Heart left ventricle (tissue), 16 donors: ENCODE measurements at regions of chr5 and their contacts with region 1.

Region 1: GRCh38 chr5:157994906-157995519 is 136.1 kb upstream of the CLINT1 start:
- DNase-seq: peak; percentile 60 to 73 (median 69)
- ATAC-seq: peak; percentile 91 to 96 (median 95)
- H3K4me3 ChIP-seq: no peak overlapping the region
- H3K27ac ChIP-seq: no peak overlapping the region
- H3K4me1 ChIP-seq: no peaks in the 10 kb centered on the region
- H3K27me3 ChIP-seq: peaks cover 0 to 4% (median 0%) of the 10 kb centered on the region in 9 donors
- CTCF ChIP-seq: peak; percentile 56 to 81 (median 76)
- POLR2A ChIP-seq: no peak

Region 2: DNA sequence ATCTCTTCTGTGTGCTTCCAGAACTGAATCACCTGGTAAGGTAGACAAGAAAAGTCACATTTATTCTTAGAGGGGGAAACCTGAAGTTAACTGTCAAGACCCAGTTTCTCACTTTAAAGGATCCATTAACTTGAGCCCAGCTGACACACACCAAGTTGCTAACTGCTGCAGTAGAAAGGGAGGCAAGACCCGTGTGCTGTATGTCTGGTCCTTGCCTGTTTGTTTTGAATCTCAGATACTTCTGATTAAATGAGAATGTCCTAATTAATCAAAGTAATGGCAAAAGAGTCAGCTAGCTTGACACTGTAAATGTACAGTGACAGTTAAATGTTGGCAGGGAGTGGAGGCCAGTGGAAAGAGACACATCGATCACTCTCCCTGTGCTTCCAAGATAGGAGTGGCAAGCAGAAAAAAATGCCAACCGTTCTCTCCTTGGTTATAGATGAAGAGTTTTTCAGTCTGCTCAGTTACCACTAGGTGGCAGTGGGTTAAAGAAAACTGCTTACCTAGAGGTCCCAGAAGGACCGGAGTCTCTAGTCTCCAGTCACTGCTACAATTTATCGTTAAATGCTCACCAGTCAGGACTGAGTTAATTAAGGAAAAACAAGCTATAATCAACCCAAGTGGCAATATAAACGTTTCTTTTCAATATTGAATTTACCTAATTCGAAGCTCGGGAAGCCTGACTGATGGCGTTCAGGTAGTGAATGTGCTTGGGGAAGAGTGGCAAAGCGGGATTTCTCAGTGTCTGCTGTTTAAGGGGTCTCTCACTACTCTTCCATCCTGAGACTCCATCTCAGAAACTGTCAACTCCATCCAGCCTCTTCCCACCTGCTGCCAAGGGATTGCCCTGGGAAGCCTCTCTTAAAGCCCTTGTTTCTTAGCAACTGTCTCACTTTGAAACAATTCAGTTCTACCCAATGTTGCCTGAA is 233.1 kb before region 1 on chr5:
- intact Hi-C with region 1: loop called in 1 of 10 experiments (anchors 5 kb)
- DNase-seq: no peak
- ATAC-seq: peak; percentile 32 to 86 (median 77)
- H3K4me3 ChIP-seq: no peak overlapping the region
- H3K27ac ChIP-seq: no peak overlapping the region
- H3K4me1 ChIP-seq: peaks cover 0 to 6% (median 0%) of the 10 kb centered on the region in 12 donors
- H3K27me3 ChIP-seq: no peaks in the 10 kb centered on the region
- CTCF ChIP-seq: peak; percentile 62 to 83 (median 78)
- POLR2A ChIP-seq: no peak

Region 3: DNA sequence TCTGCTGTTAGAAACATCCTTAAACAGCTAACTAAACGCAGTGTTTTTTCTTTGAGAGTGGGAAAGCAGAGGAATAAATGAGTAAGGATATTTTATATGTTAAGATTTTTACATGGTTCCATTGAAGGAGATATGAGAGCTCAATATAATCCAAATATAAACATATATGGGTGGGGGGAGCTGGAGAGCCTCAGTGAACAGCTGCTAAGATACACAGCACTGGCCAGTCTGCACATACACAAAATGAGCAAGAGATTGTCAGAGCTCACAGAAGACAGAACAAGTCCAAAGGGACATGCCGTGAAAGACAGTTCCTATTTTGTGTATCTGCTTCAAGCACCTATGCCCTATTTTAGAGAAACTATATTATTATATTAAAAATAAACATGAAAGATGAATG is 182.9 kb before region 1 on chr5:
- intact Hi-C with region 1: loop called in 8 of 10 experiments (anchors 1 to 10 kb)
- DNase-seq: no peak
- ATAC-seq: no peak
- H3K4me3 ChIP-seq: no peak overlapping the region
- H3K27ac ChIP-seq: no peak overlapping the region
- H3K4me1 ChIP-seq: peaks cover 0 to 11% (median 0%) of the 10 kb centered on the region in 12 donors
- H3K27me3 ChIP-seq: no peaks in the 10 kb centered on the region
- CTCF ChIP-seq: no peak
- POLR2A ChIP-seq: no peak

Region 4: DNA sequence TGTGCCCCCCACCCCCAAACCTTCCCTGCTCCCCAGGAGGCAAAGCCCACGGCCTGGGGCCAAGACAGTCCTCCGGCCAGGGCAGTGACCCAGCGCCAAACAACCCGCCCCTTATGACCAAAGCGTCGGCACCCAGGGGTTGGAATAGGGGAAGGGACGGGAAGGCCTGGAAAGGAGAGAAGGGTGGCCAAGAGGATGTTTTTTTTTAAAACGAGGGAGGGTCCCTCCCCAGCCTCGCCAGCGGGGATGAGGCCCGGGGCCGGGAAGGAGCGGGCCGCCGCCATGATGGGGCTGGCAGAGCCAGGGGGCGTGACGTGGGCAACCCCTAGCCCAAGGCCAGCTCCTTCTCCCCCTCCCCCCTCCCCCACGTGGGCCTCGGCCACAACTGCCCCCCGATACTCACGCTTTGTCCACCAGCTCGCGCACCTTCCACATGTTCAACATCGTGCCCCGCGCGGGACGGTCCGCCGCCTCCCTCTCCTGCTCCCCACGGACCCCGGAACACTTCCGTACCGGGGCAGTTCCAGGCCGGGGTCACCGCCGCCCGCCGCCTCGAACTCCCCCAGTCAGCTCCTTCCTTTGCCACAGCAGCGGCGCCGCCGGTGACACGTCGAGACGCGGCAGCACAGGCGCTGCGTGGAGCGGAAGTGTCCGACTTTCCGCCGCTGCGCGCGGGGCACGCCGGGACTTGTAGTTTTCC is 136.3 kb before region 1 on chr5 and contains the start of gene CLINT1:
- intact Hi-C with region 1: loop called in 5 of 10 experiments (anchors 2 to 10 kb)
- DNase-seq: peak; percentile 93 to 97 (median 94)
- ATAC-seq: peak; percentile 93 to 99 (median 99)
- H3K4me3 ChIP-seq: peak within 1 kb of the TSS; percentile 67 to 98 (median 88)
- H3K27ac ChIP-seq: peak within 1 kb of the TSS; percentile 35 to 93 (median 90)
- H3K4me1 ChIP-seq: peaks cover 0 to 47% (median 26%) of the 10 kb centered on the region in 12 donors
- H3K27me3 ChIP-seq: no peaks in the 10 kb centered on the region
- CTCF ChIP-seq: peak in 1 of 12 donors; percentile 12
- POLR2A ChIP-seq: peak in 1 of 2 donors; percentile 82
- total RNA-seq, gene CLINT1: 40.1 to 84.8 (median 51.2) TPM